Common myeloid progenitor, CD34-positive (primary cell): ENCODE measurements at regions of chr7 and their contacts with region 1.

Region 1: GRCh38 chr7:106021151-106022067 is 58.3 kb downstream of the CDHR3 start:
- DNase-seq: no peak
- H3K4me3 ChIP-seq: no peak overlapping the region
- H3K27ac ChIP-seq: no peak overlapping the region
- H3K4me1 ChIP-seq: peaks cover 10 to 19% (median 12%) of the 10 kb centered on the region in 4 experiments
- H3K27me3 ChIP-seq: peaks cover 0 to 98% (median 52%) of the 10 kb centered on the region in 5 experiments

Region 2: DNA sequence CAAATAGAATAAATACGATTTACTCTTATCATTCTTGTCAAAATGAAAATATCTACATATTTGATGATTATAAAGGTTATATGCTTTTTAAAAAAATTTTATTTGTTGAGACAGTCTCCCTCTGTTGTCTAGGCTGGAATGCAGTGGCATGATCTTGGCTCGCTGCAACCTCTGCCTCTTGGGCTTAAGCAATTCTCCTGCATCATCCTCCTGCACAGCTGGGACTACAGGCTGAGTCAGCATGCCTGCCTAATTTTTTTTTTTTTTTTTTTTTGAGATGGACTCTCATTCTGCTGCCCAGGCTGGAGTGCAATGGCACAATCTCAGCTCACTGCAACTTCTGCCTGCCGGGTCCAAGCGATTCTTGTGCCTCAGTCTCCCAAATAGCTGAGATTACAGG is 548.2 kb before region 1 on chr7:
- CTCF ChIA-PET with region 1: no interaction called
- POLR2A ChIA-PET with region 1: no interaction called
- DNase-seq: no peak
- H3K4me3 ChIP-seq: no peak overlapping the region
- H3K27ac ChIP-seq: no peak overlapping the region
- H3K4me1 ChIP-seq: no peaks in the 10 kb centered on the region
- H3K27me3 ChIP-seq: no peaks in the 10 kb centered on the region

Region 3: GRCh38 chr7:105849122-105849855 is 172.1 kb before region 1 on chr7:
- CTCF ChIA-PET with region 1: no interaction called
- POLR2A ChIA-PET with region 1: no interaction called
- DNase-seq: peak in 1 of 3 donors; percentile 3
- H3K4me3 ChIP-seq: no peak overlapping the region
- H3K27ac ChIP-seq: no peak overlapping the region
- H3K4me1 ChIP-seq: peaks cover 0 to 4% (median 1%) of the 10 kb centered on the region in 4 experiments
- H3K27me3 ChIP-seq: no peaks in the 10 kb centered on the region

Region 4: GRCh38 chr7:106031300-106032035 is 10.1 kb after region 1 on chr7:
- CTCF ChIA-PET with region 1: interaction called, 12 read pairs
- POLR2A ChIA-PET with region 1: interaction called, 5 read pairs
- DNase-seq: peak; percentile 49 to 82 (median 80)
- H3K4me3 ChIP-seq: peak overlapping the region in 1 of 7 experiments; percentile 14
- H3K27ac ChIP-seq: no peak overlapping the region
- H3K4me1 ChIP-seq: peaks cover 2 to 10% (median 9%) of the 10 kb centered on the region in 4 experiments
- H3K27me3 ChIP-seq: peaks cover 0 to 77% (median 25%) of the 10 kb centered on the region in 5 experiments

Region 5: GRCh38 chr7:106041140-106041717 is 19.8 kb after region 1 on chr7:
- CTCF ChIA-PET with region 1: interaction called, 21 read pairs
- POLR2A ChIA-PET with region 1: interaction called, 4 read pairs
- DNase-seq: peak; percentile 54 to 69 (median 68)
- H3K4me3 ChIP-seq: no peak overlapping the region
- H3K27ac ChIP-seq: no peak overlapping the region
- H3K4me1 ChIP-seq: peaks cover 0 to 5% (median 4%) of the 10 kb centered on the region in 4 experiments
- H3K27me3 ChIP-seq: peaks cover 0 to 26% (median 16%) of the 10 kb centered on the region in 5 experiments